HEK293T (cell line): ENCODE measurements at regions of chr4 and their contacts with region 1.

Region 1: GRCh38 chr4:147866532-147867271 is 134.8 kb downstream of the ARHGAP10 start:
- DNase-seq: peak; percentile 75

Region 2: GRCh38 chr4:147590249-147590920 is 276.3 kb before region 1 on chr4:
- CTCF ChIA-PET with region 1: interaction called, 18 read pairs
- POLR2A ChIA-PET with region 1: no interaction called
- DNase-seq: peak; percentile 57

Region 3: GRCh38 chr4:147617173-147617840 is 249.4 kb before region 1 on chr4 and contains the start of gene TMEM184C:
- CTCF ChIA-PET with region 1: interaction called, 23 read pairs
- POLR2A ChIA-PET with region 1: no interaction called
- DNase-seq: peak; percentile 94

Region 4: GRCh38 chr4:147638942-147639341 is 227.8 kb before region 1 on chr4:
- CTCF ChIA-PET with region 1: no interaction called
- POLR2A ChIA-PET with region 1: no interaction called
- DNase-seq: no peak

Region 5: DNA sequence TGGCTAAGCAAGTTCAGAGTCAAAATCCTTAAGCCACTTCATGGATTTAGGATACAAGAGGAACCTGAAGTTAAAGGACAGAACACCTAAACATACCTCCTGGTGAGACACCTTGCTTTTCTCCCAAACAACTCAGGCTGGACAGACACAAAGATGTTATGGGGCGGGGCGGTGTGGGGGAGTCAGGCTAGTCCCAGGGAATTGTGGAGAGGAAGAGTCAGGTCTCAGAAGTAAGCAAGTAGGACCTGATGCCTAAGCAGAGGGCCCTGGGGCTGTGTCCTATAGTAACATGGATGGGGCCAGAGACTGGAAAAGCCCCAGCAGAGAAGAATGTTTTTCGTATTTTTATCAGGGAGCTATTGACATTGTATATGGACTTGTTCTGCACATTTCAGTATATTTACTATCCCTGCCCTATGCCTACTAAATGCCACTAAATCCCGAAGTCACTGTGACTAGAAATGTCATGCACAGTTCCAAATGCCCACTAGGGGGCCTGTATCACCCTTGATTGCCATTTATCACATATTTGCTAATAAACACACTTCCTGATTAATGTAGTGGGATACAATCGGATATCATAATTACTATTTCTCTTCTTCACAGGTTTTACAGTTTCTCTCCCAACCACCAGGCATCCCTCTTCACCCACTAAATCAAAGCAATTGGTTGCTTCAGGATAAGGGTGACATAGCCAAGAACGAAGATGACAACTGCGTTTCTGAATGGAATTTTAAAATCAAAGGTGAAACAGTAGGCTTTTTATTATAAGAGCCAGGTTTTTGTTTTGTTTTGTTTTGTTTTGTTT is 158.6 kb before region 1 on chr4:
- CTCF ChIA-PET with region 1: interaction called, 30 read pairs
- POLR2A ChIA-PET with region 1: no interaction called
- DNase-seq: peak; percentile 41

Region 6: DNA sequence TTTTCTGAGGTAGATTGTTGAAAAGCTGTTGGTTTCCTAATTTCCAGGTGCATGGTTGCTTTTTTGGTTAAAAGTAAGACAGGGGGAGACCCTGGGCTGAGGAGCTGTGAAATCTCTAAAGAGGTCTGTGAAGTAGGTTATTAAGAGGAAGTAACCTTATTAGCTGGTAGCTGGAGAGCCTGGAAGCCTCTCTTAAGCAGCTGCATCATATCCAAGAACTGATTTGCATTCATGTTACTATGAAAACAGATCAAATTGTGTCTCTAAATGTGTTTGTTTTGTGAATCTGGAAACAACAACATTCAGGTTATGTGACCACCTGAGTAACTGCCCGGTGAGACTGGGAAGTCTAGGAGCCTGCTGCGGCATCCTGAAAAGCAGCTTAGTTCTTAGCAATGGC is 80.7 kb before region 1 on chr4:
- CTCF ChIA-PET with region 1: interaction called, 17 read pairs
- POLR2A ChIA-PET with region 1: no interaction called
- DNase-seq: no peak

Region 7: GRCh38 chr4:147837435-147837834 is 29.3 kb before region 1 on chr4:
- CTCF ChIA-PET with region 1: interaction called, 12 read pairs
- POLR2A ChIA-PET with region 1: no interaction called
- DNase-seq: peak; percentile 53

Region 8: DNA sequence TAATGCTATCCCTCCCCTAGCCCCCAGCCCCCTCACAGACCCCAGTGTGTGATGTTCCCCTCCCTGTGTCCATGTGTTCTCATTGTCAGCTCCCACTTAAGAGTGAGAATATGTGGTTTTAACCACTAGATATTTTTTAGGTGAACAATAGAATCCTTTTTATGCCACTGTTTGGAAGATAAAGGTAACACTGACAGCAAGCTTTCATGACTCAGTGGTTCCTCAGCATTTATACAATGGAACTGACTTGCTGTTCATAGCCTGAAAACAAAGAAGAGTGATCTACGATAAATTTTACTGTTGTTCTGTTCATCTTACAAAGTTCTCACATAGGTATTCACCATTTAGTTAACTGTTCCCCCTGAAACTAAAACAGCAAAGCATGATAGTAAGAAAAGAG is 13.0 kb after region 1 on chr4:
- CTCF ChIA-PET with region 1: interaction called, 20 read pairs
- POLR2A ChIA-PET with region 1: no interaction called
- DNase-seq: no peak